Vagina (tissue), 2 donors: ENCODE measurements at regions of chr1 and their contacts with region 1.

Region 1: GRCh38 chr1:156859523-156860112 is 701 bp upstream of the INSRR start:
- DNase-seq: no peak
- H3K4me3 ChIP-seq: peak overlapping the region; percentile 40 to 51
- H3K27ac ChIP-seq: peak overlapping the region; percentile 62
- H3K4me1 ChIP-seq: peaks cover 29% of the 10 kb centered on the region
- H3K27me3 ChIP-seq: no peaks in the 10 kb centered on the region
- CTCF ChIP-seq: no peak
- POLR2A ChIP-seq: no peak

Region 2: DNA sequence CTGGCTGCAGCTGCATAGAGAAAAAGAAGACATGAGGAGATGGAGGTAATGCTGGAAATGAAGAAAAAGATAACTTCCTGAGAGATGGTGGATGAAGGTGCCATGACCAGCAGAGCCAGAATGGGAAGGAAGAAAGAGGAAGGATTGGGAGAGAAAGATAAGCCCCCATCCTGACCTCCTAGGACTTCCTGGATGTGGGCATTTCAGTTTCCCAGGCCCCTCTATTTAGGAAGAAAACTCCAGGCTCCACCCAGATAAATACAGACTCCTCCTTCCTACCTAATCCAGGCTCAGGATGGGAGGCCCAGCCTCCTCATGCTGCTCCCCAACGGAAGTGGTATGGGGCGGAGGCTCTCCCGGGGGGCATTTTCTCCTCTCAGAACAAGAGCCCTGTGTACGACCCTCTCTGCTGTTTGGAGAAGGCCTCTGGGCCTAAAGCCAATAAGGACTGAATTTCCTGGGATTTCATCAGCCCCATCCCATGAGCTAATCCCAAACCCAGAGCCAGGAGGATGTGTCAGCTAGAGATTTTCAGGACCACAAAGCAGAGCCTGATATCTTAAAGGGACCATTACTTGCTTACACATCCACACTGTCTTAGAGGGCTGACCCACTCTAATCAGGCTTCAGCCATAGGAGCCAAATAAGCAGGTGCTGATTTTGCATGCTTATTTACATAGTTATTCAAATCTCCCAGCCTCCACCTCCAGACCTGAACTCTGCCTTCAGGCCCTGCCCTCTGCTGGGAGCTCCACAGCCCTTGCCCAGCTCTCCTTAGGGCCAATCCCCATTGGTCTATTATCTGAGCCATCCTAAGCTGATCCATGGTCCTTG is 876.2 kb before region 1 on chr1:
- intact Hi-C with region 1: no loop called
- DNase-seq: no peak
- H3K4me3 ChIP-seq: peak overlapping the region; percentile 32 to 36
- H3K27ac ChIP-seq: peak overlapping the region; percentile 95
- H3K4me1 ChIP-seq: peaks cover 59% of the 10 kb centered on the region
- H3K27me3 ChIP-seq: no peaks in the 10 kb centered on the region
- CTCF ChIP-seq: no peak
- POLR2A ChIP-seq: no peak

Region 3: DNA sequence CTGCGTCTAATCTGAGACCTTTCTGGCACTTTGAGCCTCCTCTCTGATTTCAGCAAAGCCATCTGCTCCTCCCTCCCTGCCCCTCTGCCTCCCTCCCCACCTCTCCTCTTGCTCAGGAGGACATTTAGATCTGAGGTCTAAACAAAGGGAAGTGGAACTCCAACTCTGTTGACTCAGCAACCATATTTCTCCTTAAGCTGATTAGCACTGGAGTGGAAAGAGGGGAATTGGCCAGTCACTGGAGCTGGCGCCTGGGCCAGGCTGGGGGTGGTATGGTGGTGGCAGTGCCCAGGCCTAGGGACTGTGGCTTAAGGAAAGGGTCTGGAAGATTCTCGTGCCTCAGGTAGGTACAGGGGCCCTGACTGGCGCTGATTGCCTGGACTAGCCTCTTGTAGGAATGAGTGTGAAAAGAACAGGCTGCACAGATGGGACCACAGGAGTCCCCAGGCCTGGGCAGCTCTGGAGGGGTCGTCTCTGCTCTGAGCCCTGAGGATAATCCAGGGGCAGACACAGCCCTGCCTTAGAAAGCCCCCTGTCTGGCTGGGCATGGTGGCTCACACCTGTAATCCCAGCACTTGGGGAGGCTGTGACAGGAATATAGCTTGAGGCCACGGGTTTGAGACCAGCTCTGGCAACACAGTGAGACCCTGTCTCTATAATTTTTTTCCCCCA is 54.9 kb before region 1 on chr1:
- intact Hi-C with region 1: loop called (anchors 5 kb)
- DNase-seq: no peak
- H3K4me3 ChIP-seq: no peak overlapping the region
- H3K27ac ChIP-seq: no peak overlapping the region
- H3K4me1 ChIP-seq: peaks cover 53% of the 10 kb centered on the region
- H3K27me3 ChIP-seq: no peaks in the 10 kb centered on the region
- CTCF ChIP-seq: no peak
- POLR2A ChIP-seq: no peak